Astrocyte of the cerebellum (primary cell): ENCODE measurements at regions of chr2 and their contacts with region 1.

Region 1: GRCh38 chr2:85091844-85092243 is 41.3 kb upstream of the TCF7L1 start:
- DNase-seq: no peak
- H3K4me3 ChIP-seq: no peak overlapping the region
- CTCF ChIP-seq: no peak

Region 2: GRCh38 chr2:85022232-85022631 is 69.6 kb before region 1 on chr2:
- in situ Hi-C with region 1: loop called (anchors 5 kb)
- DNase-seq: no peak
- H3K4me3 ChIP-seq: no peak overlapping the region
- CTCF ChIP-seq: no peak

Region 3: DNA sequence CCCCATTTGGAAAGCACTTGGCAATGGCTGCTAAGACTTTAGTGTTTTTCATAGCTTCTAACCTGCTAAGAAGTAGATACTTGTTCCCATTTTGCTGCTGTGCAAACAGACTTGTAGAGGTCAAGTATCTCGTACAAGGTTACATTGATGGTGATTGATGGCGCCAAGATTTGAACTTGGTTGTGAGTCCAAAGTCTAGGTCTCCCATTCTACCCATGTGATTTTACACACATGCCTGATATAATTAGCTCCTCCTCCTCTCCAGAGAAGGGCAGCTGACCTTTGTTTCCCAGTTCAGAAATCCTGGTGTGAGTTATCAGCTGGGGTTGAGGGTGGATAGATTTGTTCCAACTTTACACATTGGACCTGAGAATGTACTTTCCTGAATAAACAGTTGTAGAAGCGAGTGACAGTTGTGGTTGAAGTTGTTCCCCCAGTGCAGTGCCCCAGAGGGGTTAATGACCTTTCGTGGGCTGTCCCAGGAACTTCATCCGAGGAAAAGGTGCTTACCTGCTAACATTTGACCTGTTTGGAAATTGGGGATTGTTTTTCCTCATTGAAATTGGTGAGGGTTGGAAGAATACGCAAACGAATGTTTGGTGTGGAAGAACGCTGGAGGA is 51.7 kb after region 1 on chr2:
- in situ Hi-C with region 1: no loop called
- DNase-seq: no peak
- H3K4me3 ChIP-seq: no peak overlapping the region
- CTCF ChIP-seq: no peak

Region 4: DNA sequence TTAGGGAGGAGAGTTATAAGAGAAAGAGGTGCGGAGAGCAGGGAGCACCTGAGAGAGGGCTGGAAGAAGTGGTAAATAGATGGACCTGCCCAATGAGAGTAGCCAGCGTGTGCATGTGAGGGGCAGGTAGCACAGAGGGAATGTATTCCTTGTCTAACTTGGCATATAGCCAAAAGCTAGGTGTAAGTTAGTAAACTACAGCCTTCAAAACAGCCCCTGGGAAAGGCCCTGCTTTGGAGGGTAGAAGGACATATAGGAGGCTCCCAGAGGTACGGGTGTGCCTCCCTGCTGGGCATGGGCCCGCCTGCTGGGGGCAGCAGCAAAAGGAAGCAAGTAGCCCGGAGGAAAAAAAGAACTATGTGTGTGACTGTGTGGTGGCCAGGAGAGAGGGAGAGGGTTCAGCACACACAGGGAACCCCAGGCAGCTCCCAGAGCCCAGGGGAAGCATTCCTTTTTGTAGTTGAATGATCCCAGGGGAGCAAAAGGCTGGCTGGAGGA is 89.3 kb after region 1 on chr2:
- in situ Hi-C with region 1: no loop called
- DNase-seq: no peak
- H3K4me3 ChIP-seq: no peak overlapping the region
- CTCF ChIP-seq: no peak